SK-N-SH (cell line): ENCODE measurements at regions of chr17 and their contacts with region 1.

Region 1: GRCh38 chr17:78019367-78019975 is 61.0 kb downstream of the TNRC6C start:
- DNase-seq: peak; percentile 40
- H3K4me3 ChIP-seq: no peak overlapping the region
- H3K27ac ChIP-seq: no peak overlapping the region
- H3K4me1 ChIP-seq: peaks cover 0 to 9% of the 10 kb centered on the region in 2 experiments; a peak in 2 of 4 replicates
- H3K27me3 ChIP-seq: no peaks in the 10 kb centered on the region
- CTCF ChIP-seq: peak; percentile 88
- EP300 ChIP-seq: no peak
- RAD21 ChIP-seq: peak; percentile 83

Region 2: GRCh38 chr17:77772461-77772897 is 247.0 kb before region 1 on chr17:
- CTCF ChIA-PET with region 1: interaction called, 10 read pairs
- POLR2A ChIA-PET with region 1: no interaction called
- DNase-seq: peak; percentile 85
- H3K4me3 ChIP-seq: no peak overlapping the region
- H3K27ac ChIP-seq: peak overlapping the region in 1 of 2 experiments; percentile 13; a peak in 1 of 4 replicates
- H3K4me1 ChIP-seq: peaks cover 0 to 27% of the 10 kb centered on the region in 2 experiments; a peak in 1 of 4 replicates
- H3K27me3 ChIP-seq: no peaks in the 10 kb centered on the region
- CTCF ChIP-seq: peak; percentile 50
- EP300 ChIP-seq: no peak
- RAD21 ChIP-seq: peak; percentile 69

Region 3: GRCh38 chr17:77808686-77809425 is 210.6 kb before region 1 on chr17:
- CTCF ChIA-PET with region 1: no interaction called
- POLR2A ChIA-PET with region 1: no interaction called
- DNase-seq: no peak
- H3K4me3 ChIP-seq: no peak overlapping the region
- H3K27ac ChIP-seq: no peak overlapping the region
- H3K4me1 ChIP-seq: peaks cover 5 to 7% of the 10 kb centered on the region in 2 experiments; a peak in 2 of 4 replicates
- H3K27me3 ChIP-seq: no peaks in the 10 kb centered on the region
- CTCF ChIP-seq: no peak
- EP300 ChIP-seq: no peak
- RAD21 ChIP-seq: no peak

Region 4: GRCh38 chr17:78040440-78041385 is 21.2 kb after region 1 on chr17:
- CTCF ChIA-PET with region 1: interaction called, 49 read pairs
- POLR2A ChIA-PET with region 1: interaction called, 3 read pairs
- DNase-seq: peak; percentile 95
- H3K4me3 ChIP-seq: peak overlapping the region; percentile 72 to 75
- H3K27ac ChIP-seq: peak overlapping the region; percentile 89 to 100
- H3K4me1 ChIP-seq: peaks cover 7 to 41% of the 10 kb centered on the region in 2 experiments; a peak in 2 of 4 replicates
- H3K27me3 ChIP-seq: no peaks in the 10 kb centered on the region
- CTCF ChIP-seq: peak; percentile 40
- EP300 ChIP-seq: peak in 1 of 2 experiments; percentile 77; a peak in 2 of 4 replicates
- RAD21 ChIP-seq: peak; percentile 9; the same call in 1 of the 2 replicates

Region 5: GRCh38 chr17:78089576-78090281 is 70.3 kb after region 1 on chr17:
- CTCF ChIA-PET with region 1: interaction called, 35 read pairs
- POLR2A ChIA-PET with region 1: no interaction called
- DNase-seq: no peak
- H3K4me3 ChIP-seq: no peak overlapping the region
- H3K27ac ChIP-seq: no peak overlapping the region
- H3K4me1 ChIP-seq: peaks cover 0 to 3% of the 10 kb centered on the region in 2 experiments; a peak in 1 of 4 replicates
- H3K27me3 ChIP-seq: no peaks in the 10 kb centered on the region
- CTCF ChIP-seq: no peak
- EP300 ChIP-seq: no peak
- RAD21 ChIP-seq: no peak